Cardiac septum (tissue), 1 donor: ENCODE measurements at regions of chr17 and their contacts with region 1.

Region 1: DNA sequence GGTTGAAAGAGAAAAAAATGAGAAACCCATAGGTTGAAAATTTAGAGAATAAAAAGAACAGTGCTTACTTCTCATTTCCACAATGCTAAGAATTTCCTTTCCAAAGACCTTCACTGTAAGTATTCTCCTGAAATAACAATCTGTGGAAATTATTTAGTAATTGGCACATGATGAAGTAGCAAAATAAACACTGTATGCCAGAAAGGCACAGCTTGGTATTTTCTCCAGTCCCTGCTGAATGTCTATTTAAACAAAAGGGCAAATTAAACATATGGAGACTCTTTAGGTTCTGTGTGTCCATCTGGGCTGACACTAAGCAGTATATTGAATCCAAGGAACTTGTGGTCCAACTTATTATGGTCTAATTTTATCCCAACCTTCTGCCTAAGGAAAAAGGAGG is 46.1 kb downstream of the CHCT1 start:
- DNase-seq: no peak

Region 2: DNA sequence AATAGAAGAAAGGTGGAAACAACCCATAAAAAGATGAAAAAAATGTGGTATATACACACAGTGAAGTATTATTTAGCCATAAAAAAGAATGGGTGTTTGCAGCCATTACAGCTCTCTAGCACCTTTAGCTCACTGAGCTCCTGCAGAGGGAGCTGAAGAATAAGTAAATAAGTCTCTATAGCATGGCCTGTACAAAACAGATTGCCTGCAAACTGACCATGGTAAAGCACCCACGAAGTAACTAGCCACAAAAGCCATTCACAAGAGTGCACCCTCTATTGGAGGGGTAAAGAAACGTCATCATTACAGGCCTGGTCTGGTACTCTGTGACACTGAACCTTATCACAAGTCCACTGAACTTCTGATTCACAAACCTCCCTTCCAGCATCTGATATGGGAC is 152.7 kb before region 1 on chr17:
- intact Hi-C with region 1: no loop called
- DNase-seq: no peak

Region 3: DNA sequence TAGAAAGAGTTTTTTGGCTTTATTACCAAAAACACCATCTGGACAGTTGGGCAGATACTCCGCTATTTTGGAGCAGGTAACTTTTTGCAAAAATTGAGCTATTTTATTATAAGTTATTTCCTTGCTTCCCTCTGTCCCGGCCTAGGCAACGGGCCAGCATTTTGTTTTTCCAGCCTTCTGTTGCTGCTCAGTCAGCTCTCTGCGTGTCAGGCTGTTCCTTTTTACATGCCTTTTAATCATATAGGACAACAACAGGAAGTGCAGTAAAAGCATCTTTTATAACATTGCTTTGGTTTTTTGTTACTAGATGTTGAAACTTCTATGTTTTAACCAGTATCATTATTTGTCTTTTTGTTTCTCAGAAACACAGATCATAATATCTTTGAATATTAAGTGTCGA is 162.0 kb after region 1 on chr17:
- intact Hi-C with region 1: loop called (anchors 10 kb)
- DNase-seq: no peak